CD8-positive, alpha-beta T cell (primary cell): ENCODE measurements at regions of chr13 and their contacts with region 1.

Region 1: GRCh38 chr13:106633321-106633720 is 65.4 kb upstream of the ARGLU1 start:
- DNase-seq: no peak
- ATAC-seq: no peak
- H3K4me3 ChIP-seq: no peak overlapping the region
- H3K4me3 Mint-ChIP-seq: no peak overlapping the region
- H3K27ac ChIP-seq: no peak overlapping the region
- H3K27ac Mint-ChIP-seq: no peak overlapping the region
- H3K4me1 ChIP-seq: no peaks in the 10 kb centered on the region
- H3K4me1 Mint-ChIP-seq: no peaks in the 10 kb centered on the region
- H3K27me3 ChIP-seq: no peaks in the 10 kb centered on the region
- H3K27me3 Mint-ChIP-seq: peaks cover 19% of the 10 kb centered on the region
- CTCF ChIP-seq: no peak

Region 2: GRCh38 chr13:106619688-106620555 is 13.4 kb before region 1 on chr13:
- CTCF ChIA-PET with region 1: interaction called, 13 read pairs
- POLR2A ChIA-PET with region 1: no interaction called
- intact Hi-C with region 1: no loop called
- DNase-seq: peak in 5 of 9 experiments; percentile 19 to 57 (median 30)
- ATAC-seq: peak; percentile 76
- H3K4me3 ChIP-seq: no peak overlapping the region
- H3K4me3 Mint-ChIP-seq: no peak overlapping the region
- H3K27ac ChIP-seq: no peak overlapping the region
- H3K27ac Mint-ChIP-seq: no peak overlapping the region
- H3K4me1 ChIP-seq: no peaks in the 10 kb centered on the region
- H3K4me1 Mint-ChIP-seq: peaks cover 4% of the 10 kb centered on the region
- H3K27me3 ChIP-seq: no peaks in the 10 kb centered on the region
- H3K27me3 Mint-ChIP-seq: peaks cover 23% of the 10 kb centered on the region
- CTCF ChIP-seq: peak; percentile 68